HEK293T (cell line): ENCODE measurements at regions of chr3 and their contacts with region 1.

Region 1: GRCh38 chr3:134197681-134198261 is 52.9 kb downstream of the RYK start:
- DNase-seq: peak; percentile 57

Region 2: GRCh38 chr3:133938770-133939462 is 258.9 kb before region 1 on chr3:
- CTCF ChIA-PET with region 1: no interaction called
- POLR2A ChIA-PET with region 1: no interaction called
- DNase-seq: no peak

Region 3: DNA sequence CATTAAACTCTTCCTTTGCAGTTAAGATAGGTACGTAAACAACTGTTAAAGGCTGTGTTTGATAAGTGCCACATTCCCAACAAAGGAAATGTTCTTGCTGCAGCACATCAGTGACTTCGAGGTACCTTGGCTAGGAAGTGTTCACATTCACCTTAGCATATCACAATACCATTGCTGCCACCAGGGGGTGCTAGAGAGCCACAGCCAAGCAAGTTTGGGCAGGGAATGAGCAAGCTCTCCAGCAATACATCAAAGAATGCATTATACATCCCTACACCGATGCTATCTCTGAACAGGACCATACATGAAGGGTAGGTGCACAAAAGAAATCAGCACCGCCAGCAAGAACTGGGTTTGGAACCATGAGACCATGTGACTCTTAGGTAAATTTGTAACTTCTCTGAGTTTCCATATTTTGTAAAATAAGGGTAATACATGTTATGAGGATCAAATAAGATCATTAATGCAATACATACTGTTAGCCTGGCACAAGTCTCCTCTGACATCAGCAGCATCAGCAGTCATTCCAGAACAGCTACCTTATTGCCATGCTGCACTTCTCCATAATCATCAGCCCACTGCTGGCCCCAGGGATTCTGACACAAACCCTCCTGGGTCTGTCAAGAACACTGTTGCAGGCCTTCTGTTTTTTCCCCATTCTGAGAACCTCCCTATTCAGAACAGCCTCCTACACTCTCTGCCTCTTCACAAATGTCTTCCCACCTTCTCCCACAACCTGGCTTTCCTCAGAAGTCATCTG is 15.3 kb after region 1 on chr3:
- CTCF ChIA-PET with region 1: interaction called, 17 read pairs
- POLR2A ChIA-PET with region 1: no interaction called
- DNase-seq: peak; percentile 80

Region 4: GRCh38 chr3:134242649-134243617 is 45.2 kb after region 1 on chr3:
- CTCF ChIA-PET with region 1: no interaction called
- POLR2A ChIA-PET with region 1: no interaction called
- DNase-seq: no peak